WTC11 (cell line): ENCODE measurements at regions of chr12 and their contacts with region 1.

Region 1: GRCh38 chr12:65300680-65301349 is 22.3 kb downstream of the MSRB3 start:
- DNase-seq: peak; percentile 37
- ATAC-seq: peak; percentile 87
- H3K4me3 Mint-ChIP-seq: no peak overlapping the region
- H3K27ac Mint-ChIP-seq: no peak overlapping the region
- H3K4me1 Mint-ChIP-seq: peaks cover 7% of the 10 kb centered on the region; the same call in 1 of the 2 replicates
- H3K27me3 Mint-ChIP-seq: no peaks in the 10 kb centered on the region
- CTCF ChIP-seq: no peak

Region 2: DNA sequence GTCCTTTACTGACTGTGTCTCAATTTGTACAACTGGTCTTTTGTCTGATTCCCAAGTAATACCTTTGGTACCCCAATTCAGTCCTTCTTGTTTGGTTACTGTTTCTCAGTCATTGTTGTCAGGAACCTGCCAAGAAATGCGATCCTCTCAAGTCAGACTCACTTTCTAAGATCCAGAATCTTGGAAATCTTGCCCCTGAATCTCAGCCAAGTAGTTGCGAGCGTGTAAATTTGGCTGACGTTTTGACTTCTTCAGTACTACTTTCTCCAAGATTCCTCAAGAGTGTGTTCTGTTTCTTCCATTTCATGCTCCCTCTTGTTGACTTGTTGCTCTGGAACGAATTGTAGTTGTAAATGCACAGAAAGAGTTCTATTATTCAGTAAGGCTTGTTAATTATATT is 91.7 kb after region 1 on chr12:
- CTCF ChIA-PET with region 1: no interaction called
- POLR2A ChIA-PET with region 1: no interaction called
- DNase-seq: no peak
- ATAC-seq: no peak
- H3K4me3 Mint-ChIP-seq: no peak overlapping the region
- H3K27ac Mint-ChIP-seq: no peak overlapping the region
- H3K4me1 Mint-ChIP-seq: no peaks in the 10 kb centered on the region
- H3K27me3 Mint-ChIP-seq: no peaks in the 10 kb centered on the region
- CTCF ChIP-seq: no peak

Region 3: DNA sequence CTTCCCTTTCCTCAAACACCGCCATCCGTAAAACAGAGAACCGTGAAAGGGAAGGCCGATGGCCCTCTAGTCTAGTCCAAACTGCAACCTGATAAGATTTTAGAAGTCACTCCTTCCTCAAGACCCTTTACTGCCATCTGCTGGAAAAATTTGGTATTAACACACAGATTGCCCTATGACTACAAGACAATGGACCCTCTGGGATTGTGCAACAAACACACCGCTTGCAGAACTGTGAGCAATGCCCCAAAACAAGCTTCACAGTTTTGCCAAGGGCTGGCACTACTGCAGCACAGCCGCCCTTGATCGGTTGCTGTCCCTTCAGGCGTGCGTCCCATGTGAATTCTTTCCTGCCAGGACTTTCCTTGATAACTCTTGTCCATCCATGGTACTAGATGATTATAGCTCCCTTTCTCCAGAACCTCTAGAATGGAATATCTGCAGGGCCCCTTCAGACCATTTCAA is 806.7 kb after region 1 on chr12:
- CTCF ChIA-PET with region 1: interaction called, 22 read pairs
- POLR2A ChIA-PET with region 1: no interaction called
- DNase-seq: peak; percentile 36
- ATAC-seq: peak; percentile 87
- H3K4me3 Mint-ChIP-seq: no peak overlapping the region
- H3K27ac Mint-ChIP-seq: peak overlapping the region; percentile 69
- H3K4me1 Mint-ChIP-seq: peaks cover 21% of the 10 kb centered on the region
- H3K27me3 Mint-ChIP-seq: no peaks in the 10 kb centered on the region; the same call in 1 of the 2 replicates
- CTCF ChIP-seq: peak; percentile 85